Adrenal gland (tissue), 19 donors: ENCODE measurements at regions of chr14 and their contacts with region 1.

Region 1: GRCh38 chr14:91323671-91324605 is 79.4 kb upstream of the GPR68 start:
- DNase-seq: peak; percentile 70 to 96 (median 84)
- H3K4me3 ChIP-seq: peak overlapping the region in 1 of 4 donors; percentile 5
- H3K27ac ChIP-seq: peak overlapping the region in 2 of 5 donors; percentile 60 to 73
- H3K4me1 ChIP-seq: peaks cover 0 to 22% of the 10 kb centered on the region in 2 donors
- H3K27me3 ChIP-seq: no peaks in the 10 kb centered on the region
- CTCF ChIP-seq: peak; percentile 84 to 99 (median 92)
- POLR2A ChIP-seq: no peak

Region 2: GRCh38 chr14:91418387-91419043 is 94.6 kb after region 1 on chr14:
- intact Hi-C with region 1: loop called (anchors 2 to 5 kb)
- DNase-seq: peak; percentile 38 to 74 (median 56)
- H3K4me3 ChIP-seq: peak overlapping the region in 2 of 4 donors; percentile 7 to 81
- H3K27ac ChIP-seq: no peak overlapping the region
- H3K4me1 ChIP-seq: peaks cover 8 to 18% of the 10 kb centered on the region in 2 donors
- H3K27me3 ChIP-seq: no peaks in the 10 kb centered on the region
- CTCF ChIP-seq: peak; percentile 92 to 98 (median 95)
- POLR2A ChIP-seq: no peak